B cell (primary cell): ENCODE measurements at regions of chr12 and their contacts with region 1.

Region 1: DNA sequence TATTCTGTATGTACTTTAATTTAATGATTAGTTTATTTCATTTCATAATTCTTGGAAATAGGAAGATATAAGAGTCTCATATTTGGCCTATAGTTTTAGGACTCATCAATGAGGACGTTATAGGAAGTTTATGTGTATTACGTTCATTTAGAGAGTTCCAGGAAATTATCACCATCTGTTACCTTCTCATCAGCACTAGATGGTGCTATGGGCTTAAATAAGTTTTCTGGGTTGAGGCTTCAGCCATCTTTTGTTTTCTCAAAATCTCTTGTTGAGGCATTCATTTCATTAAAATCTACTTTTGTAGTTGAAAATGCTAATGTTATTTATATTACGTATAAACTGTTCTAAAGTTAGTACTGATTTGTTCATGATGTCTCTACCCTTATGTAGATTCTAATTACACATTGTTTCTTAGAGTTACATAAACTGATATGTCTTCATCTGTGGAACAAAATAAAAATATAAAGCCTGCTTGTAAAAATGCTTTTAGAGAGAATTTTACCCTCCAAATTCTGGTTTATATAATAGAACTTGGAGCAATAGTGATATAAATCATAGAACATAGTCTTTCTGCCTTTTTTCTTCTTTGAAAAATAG is 89.2 kb downstream of the CFAP54 start:
- DNase-seq: peak; percentile 69
- ATAC-seq: peak; percentile 60
- H3K4me3 ChIP-seq: no peak overlapping the region
- H3K4me3 Mint-ChIP-seq: no peak overlapping the region
- H3K27ac ChIP-seq: no peak overlapping the region
- H3K27ac Mint-ChIP-seq: no peak overlapping the region
- H3K4me1 ChIP-seq: no peaks in the 10 kb centered on the region
- H3K4me1 Mint-ChIP-seq: peaks cover 2% of the 10 kb centered on the region
- H3K27me3 ChIP-seq: no peaks in the 10 kb centered on the region
- H3K27me3 Mint-ChIP-seq: no peaks in the 10 kb centered on the region
- CTCF ChIP-seq: peak; percentile 81

Region 2: GRCh38 chr12:96906849-96907670 is 328.4 kb after region 1 on chr12 and contains the start of gene NEDD1:
- CTCF ChIA-PET with region 1: no interaction called
- POLR2A ChIA-PET with region 1: no interaction called
- intact Hi-C with region 1: loop called (anchors 10 kb)
- DNase-seq: peak; percentile 89
- ATAC-seq: peak; percentile 85
- H3K4me3 ChIP-seq: peak within 1 kb of the TSS; percentile 82 to 98 (median 94)
- H3K4me3 Mint-ChIP-seq: peak within 1 kb of the TSS; percentile 97
- H3K27ac ChIP-seq: peak within 1 kb of the TSS; percentile 91 to 96
- H3K27ac Mint-ChIP-seq: peak within 1 kb of the TSS; percentile 97
- H3K4me1 ChIP-seq: peaks cover 17 to 21% of the 10 kb centered on the region in 2 donors
- H3K4me1 Mint-ChIP-seq: peaks cover 42% of the 10 kb centered on the region
- H3K27me3 ChIP-seq: no peaks in the 10 kb centered on the region
- H3K27me3 Mint-ChIP-seq: no peaks in the 10 kb centered on the region
- CTCF ChIP-seq: no peak
- total RNA-seq, gene NEDD1: 16.8 and 20.3 TPM in 2 replicates

Region 3: DNA sequence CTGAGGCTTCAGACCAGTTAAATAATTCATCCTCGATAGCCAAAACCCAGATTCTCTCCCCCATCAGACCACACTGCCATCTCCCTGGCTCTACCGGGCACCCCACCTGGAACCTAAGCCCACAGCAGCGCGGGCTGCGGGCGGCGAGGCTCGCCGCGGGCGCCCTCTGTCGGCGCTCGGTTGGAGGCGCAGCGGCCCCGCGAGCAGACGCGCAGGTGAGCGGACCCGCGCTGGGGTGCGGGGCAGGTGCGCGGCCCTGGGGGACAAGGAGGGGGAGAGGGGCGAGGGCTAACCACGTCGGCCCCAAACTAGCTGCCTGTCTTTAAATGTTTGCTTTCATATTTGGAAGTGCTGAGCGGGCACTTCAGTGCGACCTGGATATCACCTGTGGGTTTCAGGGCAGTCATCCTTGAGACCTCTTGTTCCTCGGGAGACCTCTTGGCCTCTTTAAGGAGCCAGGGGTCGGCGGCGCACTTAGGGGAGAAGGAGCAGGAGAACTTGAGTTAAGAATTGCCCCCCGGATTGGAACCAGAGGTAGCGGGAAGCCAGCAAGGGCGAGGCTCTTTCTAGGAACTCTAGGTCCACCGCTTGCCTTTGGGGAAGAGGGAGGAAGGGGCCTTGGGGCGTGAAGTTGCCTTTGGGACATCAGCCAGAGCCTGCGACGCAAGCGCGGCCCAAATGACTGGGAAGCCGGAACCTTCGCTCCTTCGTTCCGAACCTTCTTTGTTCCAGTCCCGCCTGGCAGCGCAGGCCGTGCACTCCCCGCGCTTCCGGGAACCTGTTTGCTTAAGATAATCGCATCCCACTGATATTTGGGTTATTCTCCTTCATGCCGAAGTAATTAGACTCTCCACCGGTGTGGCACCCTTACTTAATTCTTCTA is 407.1 kb after region 1 on chr12:
- CTCF ChIA-PET with region 1: interaction called, 11 read pairs
- POLR2A ChIA-PET with region 1: no interaction called
- intact Hi-C with region 1: no loop called
- DNase-seq: peak; percentile 67
- ATAC-seq: peak; percentile 83
- H3K4me3 ChIP-seq: peak overlapping the region in 4 of 5 experiments; percentile 14 to 59 (median 42)
- H3K4me3 Mint-ChIP-seq: peak overlapping the region; percentile 66
- H3K27ac ChIP-seq: no peak overlapping the region
- H3K27ac Mint-ChIP-seq: no peak overlapping the region
- H3K4me1 ChIP-seq: peaks cover 10 to 12% of the 10 kb centered on the region in 2 donors
- H3K4me1 Mint-ChIP-seq: peaks cover 6% of the 10 kb centered on the region
- H3K27me3 ChIP-seq: peaks cover 0 to 20% (median 18%) of the 10 kb centered on the region in 4 experiments
- H3K27me3 Mint-ChIP-seq: peaks cover 40% of the 10 kb centered on the region
- CTCF ChIP-seq: peak; percentile 92

Region 4: DNA sequence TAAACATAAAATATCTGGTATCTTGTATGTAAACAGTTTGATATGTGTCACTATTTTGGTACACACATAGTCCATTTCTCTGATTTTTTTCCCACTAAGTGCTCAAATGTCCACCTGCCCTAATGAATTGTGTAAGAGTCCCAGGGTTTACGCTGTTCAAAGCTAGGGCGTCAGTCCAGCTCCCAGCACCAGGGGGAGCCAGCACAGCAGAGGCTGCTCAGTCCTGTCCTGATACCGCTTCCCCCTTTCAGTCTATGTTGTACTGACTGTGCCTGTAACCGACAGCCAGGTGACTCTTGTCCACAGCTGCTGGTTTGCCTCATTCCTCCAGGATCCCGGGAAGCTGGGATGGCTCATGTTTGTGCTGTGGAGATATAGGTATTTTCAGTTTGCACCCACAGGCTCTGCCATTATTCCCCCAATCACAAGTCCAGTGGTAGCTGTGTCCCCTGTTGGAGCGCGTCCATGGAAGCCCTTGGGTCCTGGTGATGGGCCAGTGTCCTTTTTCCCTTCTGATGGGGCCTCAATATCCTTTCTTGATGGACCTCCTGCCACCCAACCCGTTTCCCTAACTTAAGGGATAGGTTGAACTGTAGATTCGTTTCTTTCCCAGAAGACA is 570.4 kb after region 1 on chr12:
- CTCF ChIA-PET with region 1: interaction called, 8 read pairs
- POLR2A ChIA-PET with region 1: no interaction called
- intact Hi-C with region 1: loop called (anchors 2 kb)
- DNase-seq: peak; percentile 73
- ATAC-seq: peak; percentile 87
- H3K4me3 ChIP-seq: no peak overlapping the region
- H3K4me3 Mint-ChIP-seq: no peak overlapping the region
- H3K27ac ChIP-seq: no peak overlapping the region
- H3K27ac Mint-ChIP-seq: no peak overlapping the region
- H3K4me1 ChIP-seq: no peaks in the 10 kb centered on the region
- H3K4me1 Mint-ChIP-seq: no peaks in the 10 kb centered on the region
- H3K27me3 ChIP-seq: peaks cover 0 to 5% (median 2%) of the 10 kb centered on the region in 4 experiments
- H3K27me3 Mint-ChIP-seq: peaks cover 20% of the 10 kb centered on the region
- CTCF ChIP-seq: peak; percentile 84

Region 5: GRCh38 chr12:98397316-98398105 is 1818.9 kb after region 1 on chr12:
- CTCF ChIA-PET with region 1: interaction called, 4 read pairs
- POLR2A ChIA-PET with region 1: no interaction called
- intact Hi-C with region 1: loop called (anchors 1 kb)
- DNase-seq: peak; percentile 81
- ATAC-seq: peak; percentile 92
- H3K4me3 ChIP-seq: peak overlapping the region; percentile 35 to 65 (median 49)
- H3K4me3 Mint-ChIP-seq: peak overlapping the region; percentile 84
- H3K27ac ChIP-seq: peak overlapping the region in 1 of 2 donors; percentile 32
- H3K27ac Mint-ChIP-seq: no peak overlapping the region
- H3K4me1 ChIP-seq: peaks cover 13 to 18% of the 10 kb centered on the region in 2 donors
- H3K4me1 Mint-ChIP-seq: peaks cover 27% of the 10 kb centered on the region
- H3K27me3 ChIP-seq: no peaks in the 10 kb centered on the region
- H3K27me3 Mint-ChIP-seq: no peaks in the 10 kb centered on the region
- CTCF ChIP-seq: peak; percentile 94